PC-3 (cell line): ENCODE measurements at regions of chr22 and their contacts with region 1.

Region 1: DNA sequence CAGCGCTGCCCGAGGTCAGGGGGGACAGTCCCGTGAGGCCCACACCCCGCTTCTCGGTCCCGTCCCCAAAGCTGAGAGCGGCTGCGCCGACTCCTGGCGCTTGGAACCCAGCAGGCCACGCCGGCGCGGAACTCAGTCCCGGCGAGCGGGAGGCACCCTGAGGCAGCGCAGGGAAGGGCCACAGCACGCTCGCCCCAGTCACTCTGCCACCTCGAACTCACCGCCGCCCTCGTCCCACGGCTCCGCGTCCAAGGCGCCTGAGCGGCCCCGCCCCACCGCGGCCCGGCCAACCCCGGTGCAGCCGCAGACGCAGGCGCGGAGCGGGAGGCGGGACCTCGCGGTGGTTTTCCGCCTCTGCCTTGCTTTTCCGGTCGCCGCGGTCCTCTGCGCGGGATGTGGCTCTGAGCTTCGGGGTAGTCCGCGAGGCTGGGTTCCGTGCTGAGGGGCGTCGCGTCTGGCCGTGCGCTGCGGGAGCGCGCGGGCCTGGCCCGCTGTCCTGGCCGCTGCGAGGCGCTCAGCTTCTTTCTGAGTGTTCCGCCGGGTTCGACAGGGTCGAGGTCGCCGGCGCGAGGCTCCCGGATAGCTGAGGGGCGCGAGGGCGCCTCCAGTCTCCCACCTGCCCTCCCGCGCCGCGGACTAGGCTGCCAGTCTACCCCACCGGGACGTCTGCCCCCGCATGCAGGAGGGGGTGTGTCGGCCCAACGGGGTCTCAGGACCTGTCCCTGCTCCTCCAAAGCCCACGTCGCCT is at the start of gene CDPF1:
- DNase-seq: peak; percentile 82
- ATAC-seq: peak; percentile 97
- H3K4me3 ChIP-seq: peak within 1 kb of the TSS; percentile 90
- H3K27ac ChIP-seq: peak within 1 kb of the TSS; percentile 40
- H3K4me1 ChIP-seq: peaks cover 15% of the 10 kb centered on the region
- H3K27me3 ChIP-seq: no peaks in the 10 kb centered on the region
- CTCF ChIP-seq: no peak
- total RNA-seq, gene CDPF1: 14.1 and 21.0 TPM in 2 replicates

Region 2: DNA sequence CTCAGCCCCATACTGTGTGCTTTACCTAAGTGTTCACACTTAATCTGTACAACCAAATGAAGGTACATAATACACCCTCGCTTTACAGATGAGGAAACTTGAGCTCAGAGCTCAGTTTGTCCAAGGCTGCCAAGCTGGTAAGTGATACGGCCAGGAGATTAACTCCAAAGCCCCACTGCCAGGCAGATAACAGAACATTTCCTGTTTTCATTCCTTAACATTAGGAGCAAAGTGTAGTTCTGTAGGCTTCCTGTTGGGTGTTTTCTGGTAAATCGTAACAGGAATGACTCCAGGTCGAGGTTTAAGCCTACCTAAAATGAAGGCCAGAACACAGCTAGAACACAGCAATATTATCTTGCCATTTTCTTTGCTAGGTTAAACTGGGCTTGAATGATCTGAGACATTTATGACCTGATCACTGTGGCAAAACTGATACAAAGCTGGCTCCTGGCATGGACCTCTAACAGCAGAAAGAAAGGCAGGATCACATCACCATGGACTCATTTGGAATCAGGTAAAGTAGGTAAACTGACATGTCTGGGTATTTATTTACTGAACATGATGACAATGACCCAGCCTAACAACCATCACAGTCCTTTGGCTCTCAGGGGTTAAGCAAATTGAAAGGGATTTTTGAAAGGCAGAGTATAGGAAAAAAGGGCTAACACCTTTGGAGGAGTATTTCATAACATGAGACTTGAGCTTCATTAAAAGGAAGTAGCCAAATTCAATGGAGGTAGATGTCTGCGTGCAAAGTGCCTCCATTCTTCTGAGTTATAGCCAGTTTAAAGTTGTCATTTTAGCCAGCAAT is 1090.4 kb before region 1 on chr22:
- CTCF ChIA-PET with region 1: no interaction called
- POLR2A ChIA-PET with region 1: no interaction called
- intact Hi-C with region 1: no loop called
- DNase-seq: peak; percentile 23
- ATAC-seq: no peak
- H3K4me3 ChIP-seq: peak overlapping the region; percentile 31; the same call in 1 of the 2 replicates
- H3K27ac ChIP-seq: peak overlapping the region; percentile 16
- H3K4me1 ChIP-seq: peaks cover 31% of the 10 kb centered on the region
- H3K27me3 ChIP-seq: no peaks in the 10 kb centered on the region
- CTCF ChIP-seq: no peak

Region 3: DNA sequence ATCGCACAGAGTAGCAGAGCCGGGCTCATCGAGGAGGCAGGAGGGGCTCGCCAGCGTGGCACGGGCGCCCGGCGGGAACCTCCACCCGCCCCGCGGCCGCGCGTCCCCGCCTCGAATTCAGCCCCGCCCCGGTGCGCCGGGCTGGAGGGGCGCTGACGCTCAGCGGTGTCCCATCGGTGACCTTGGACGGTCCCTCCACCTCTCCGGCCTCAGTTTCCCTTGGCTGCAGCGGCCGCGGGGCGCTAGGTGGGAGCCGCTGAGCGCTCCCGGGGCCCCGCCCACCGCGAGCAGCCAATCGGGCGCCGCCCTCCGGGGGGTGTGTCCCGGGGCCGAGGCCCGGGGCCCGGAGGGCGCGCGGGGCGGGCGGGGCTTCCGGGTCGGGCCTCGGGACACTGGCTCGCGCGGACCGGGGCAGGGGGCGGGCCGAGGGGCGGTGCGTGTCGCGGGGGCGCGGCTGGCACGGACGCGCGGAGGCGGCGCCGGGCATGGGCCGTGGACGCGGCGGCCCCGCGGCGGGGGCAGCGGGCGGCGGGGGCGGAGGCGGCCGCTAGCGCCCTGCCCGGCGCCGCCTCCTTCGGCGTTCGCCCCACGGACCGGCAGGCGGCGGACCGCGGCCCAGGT is 100.1 kb before region 1 on chr22 and contains the start of gene PPARA:
- CTCF ChIA-PET with region 1: no interaction called
- POLR2A ChIA-PET with region 1: no interaction called
- intact Hi-C with region 1: loop called (anchors 5 kb)
- DNase-seq: peak; percentile 69
- ATAC-seq: peak; percentile 81
- H3K4me3 ChIP-seq: peak within 1 kb of the TSS; percentile 79
- H3K27ac ChIP-seq: no peak within 1 kb of the TSS
- H3K4me1 ChIP-seq: peaks cover 5% of the 10 kb centered on the region
- H3K27me3 ChIP-seq: 0 out of 2 replicates have a peak, but pooled peaks cover 4% of the 10 kb centered on the region
- CTCF ChIP-seq: no peak
- total RNA-seq, gene PPARA: 6.0 and 7.7 TPM in 2 replicates

Region 4: DNA sequence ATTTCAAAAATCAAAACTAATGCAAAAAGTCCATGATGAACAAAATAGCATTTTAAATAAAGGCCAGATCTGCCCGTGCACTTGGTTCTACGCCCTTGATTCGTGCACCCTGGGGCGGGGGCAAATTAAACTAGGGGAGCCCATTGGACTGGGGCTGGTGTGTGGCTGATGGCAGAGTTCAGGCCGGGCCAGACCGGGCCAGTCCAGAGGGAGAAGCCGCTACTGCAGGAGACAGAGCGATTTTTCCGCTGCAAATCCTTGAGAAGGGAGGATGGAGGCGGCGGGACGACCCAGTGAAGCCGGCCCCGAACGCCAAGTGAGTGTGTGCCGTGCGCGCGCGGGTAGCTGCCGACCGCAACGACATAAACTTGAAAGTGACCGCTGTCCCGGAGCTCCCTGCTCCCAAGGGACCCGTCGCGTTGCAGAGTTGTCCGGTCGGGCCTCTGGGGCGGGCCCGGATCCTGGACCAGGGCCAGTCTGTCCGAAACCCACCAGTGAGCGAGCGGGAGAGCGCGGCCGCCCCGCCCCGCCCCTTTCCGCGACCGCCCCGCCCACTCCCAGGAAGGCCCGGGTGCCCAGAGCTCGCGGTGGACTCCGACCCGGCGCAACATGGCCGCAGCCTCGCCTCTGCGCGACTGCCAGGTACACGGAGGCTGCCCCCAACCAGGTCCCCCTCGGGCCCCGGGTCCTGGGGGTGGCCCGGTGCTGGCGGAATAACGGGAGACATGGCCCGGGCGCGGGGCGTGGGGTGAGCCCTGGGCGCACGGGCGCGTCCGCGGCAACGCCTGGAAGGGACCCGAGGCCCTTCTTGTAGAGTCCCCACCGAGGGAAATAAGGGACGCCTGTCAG is 17.4 kb after region 1 on chr22 and contains the start of gene TTC38:
- CTCF ChIA-PET with region 1: interaction called, 5 read pairs
- POLR2A ChIA-PET with region 1: interaction called, 15 read pairs
- intact Hi-C with region 1: no loop called
- DNase-seq: peak; percentile 81
- ATAC-seq: peak; percentile 89
- H3K4me3 ChIP-seq: peak within 1 kb of the TSS; percentile 85
- H3K27ac ChIP-seq: no peak within 1 kb of the TSS
- H3K4me1 ChIP-seq: peaks cover 10% of the 10 kb centered on the region
- H3K27me3 ChIP-seq: no peaks in the 10 kb centered on the region
- CTCF ChIP-seq: no peak
- total RNA-seq, gene TTC38: 26.8 and 41.4 TPM in 2 replicates